CD4-positive, alpha-beta T cell (primary cell): ENCODE measurements at regions of chr2 and their contacts with region 1.

Region 1: GRCh38 chr2:64523666-64524603 is at the start of gene AFTPH:
- DNase-seq: peak; percentile 98 to 100 (median 99)
- ATAC-seq: peak; percentile 90
- H3K4me3 ChIP-seq: peak within 1 kb of the TSS; percentile 89
- H3K4me3 Mint-ChIP-seq: peak within 1 kb of the TSS; percentile 100
- H3K27ac ChIP-seq: peak within 1 kb of the TSS; percentile 72 to 95
- H3K27ac Mint-ChIP-seq: peak within 1 kb of the TSS; percentile 99
- H3K4me1 ChIP-seq: peaks cover 16% of the 10 kb centered on the region
- H3K4me1 Mint-ChIP-seq: peaks cover 47% of the 10 kb centered on the region
- H3K27me3 ChIP-seq: no peaks in the 10 kb centered on the region
- H3K27me3 Mint-ChIP-seq: no peaks in the 10 kb centered on the region
- CTCF ChIP-seq: no peak
- total RNA-seq, gene AFTPH: 24.2 to 24.3 TPM

Region 2: DNA sequence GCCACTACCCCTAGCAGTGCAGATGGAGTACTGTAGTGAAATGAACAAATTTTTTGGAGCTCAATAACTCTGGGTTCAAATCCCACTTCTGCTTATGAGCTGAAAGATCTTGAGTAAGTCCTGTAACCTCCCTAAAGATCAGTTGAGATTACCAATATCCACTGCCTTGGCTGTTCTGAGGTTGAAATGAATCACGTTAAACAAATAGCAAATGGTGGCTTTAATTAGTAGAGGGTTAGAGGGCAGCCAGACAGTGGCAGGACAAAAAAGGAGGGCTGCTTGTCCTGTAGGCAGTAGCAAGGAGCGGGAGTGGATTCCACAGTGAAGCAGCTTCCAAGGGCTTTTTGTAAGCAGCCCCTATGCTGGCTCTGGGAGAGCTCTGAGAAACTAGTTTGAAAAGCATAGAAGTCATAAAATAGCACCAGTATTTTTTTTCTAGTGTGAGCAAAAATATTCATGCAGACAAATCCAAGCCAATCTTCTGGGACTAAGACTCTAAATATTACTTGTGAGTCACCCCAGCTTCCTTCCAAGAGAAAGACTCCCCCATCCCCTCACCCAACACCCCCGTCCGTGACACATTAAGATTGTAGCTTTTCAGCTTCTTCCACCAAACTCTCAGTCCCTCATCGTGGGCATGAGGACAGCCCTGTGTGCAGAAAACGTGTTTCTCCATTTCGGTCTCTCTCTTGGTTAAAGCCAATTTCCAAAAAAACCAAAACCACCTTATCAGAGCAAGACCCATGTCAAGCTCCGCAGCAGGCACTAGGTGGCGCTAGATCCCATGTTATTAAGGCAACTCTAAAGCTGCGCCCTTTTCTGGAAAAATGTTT is 193.4 kb before region 1 on chr2:
- CTCF ChIA-PET with region 1: interaction called, 15 read pairs
- POLR2A ChIA-PET with region 1: interaction called, 6 read pairs
- intact Hi-C with region 1: no loop called
- DNase-seq: peak; percentile 63 to 92 (median 74)
- ATAC-seq: peak; percentile 24
- H3K4me3 ChIP-seq: no peak overlapping the region
- H3K4me3 Mint-ChIP-seq: peak overlapping the region; percentile 81
- H3K27ac ChIP-seq: no peak overlapping the region
- H3K27ac Mint-ChIP-seq: peak overlapping the region; percentile 50
- H3K4me1 ChIP-seq: peaks cover 36% of the 10 kb centered on the region
- H3K4me1 Mint-ChIP-seq: peaks cover 38% of the 10 kb centered on the region
- H3K27me3 ChIP-seq: no peaks in the 10 kb centered on the region
- H3K27me3 Mint-ChIP-seq: no peaks in the 10 kb centered on the region
- CTCF ChIP-seq: peak; percentile 86

Region 3: GRCh38 chr2:64562148-64562784 is 38.3 kb after region 1 on chr2:
- CTCF ChIA-PET with region 1: interaction called, 57 read pairs
- POLR2A ChIA-PET with region 1: interaction called, 12 read pairs
- intact Hi-C with region 1: loop called (anchors 1 kb)
- DNase-seq: peak in 3 of 14 experiments; percentile 56 to 62 (median 62)
- ATAC-seq: peak; percentile 73
- H3K4me3 ChIP-seq: no peak overlapping the region
- H3K4me3 Mint-ChIP-seq: no peak overlapping the region
- H3K27ac ChIP-seq: no peak overlapping the region
- H3K27ac Mint-ChIP-seq: peak overlapping the region; percentile 24
- H3K4me1 ChIP-seq: no peaks in the 10 kb centered on the region
- H3K4me1 Mint-ChIP-seq: peaks cover 42% of the 10 kb centered on the region
- H3K27me3 ChIP-seq: no peaks in the 10 kb centered on the region
- H3K27me3 Mint-ChIP-seq: no peaks in the 10 kb centered on the region
- CTCF ChIP-seq: no peak

Region 4: DNA sequence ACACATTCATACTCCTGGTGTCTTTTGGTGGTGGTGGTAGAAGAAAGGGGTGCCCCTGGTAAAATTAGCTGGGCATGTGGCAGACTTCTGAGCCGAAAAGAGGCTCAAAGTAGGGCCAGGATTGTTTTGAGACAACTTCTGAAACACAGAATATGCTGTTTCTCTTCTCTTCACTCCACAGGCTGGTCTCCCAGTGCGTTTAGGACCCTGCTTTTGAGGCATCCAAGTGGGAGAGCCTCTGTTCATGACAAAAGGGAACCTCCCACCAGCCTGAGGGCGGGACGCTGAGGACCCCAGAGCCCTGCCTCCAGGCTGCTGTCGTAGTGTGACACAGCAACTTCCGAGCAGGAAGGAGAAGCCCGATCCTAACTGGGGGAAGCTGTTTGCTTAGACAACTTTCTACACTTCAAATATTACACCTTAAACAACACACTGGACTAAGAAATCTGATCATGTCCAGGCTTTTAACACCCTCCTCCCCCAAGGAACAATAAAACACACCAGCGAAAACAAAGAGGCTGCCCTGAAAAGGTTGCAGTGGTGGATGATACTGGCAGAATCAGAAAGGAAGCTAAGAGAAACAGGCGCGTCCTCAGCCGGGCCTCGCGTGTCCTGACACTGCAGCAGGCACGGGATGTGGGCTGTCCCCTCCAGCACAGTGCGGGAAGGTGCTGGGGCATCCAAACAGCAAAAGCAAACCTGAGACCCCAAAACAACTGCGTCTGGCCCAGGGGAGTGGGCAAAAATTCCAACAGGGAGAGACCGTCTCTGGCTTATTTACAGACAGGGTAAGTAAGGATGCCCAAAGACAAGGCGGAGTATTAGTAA is 120.5 kb after region 1 on chr2:
- CTCF ChIA-PET with region 1: interaction called, 5 read pairs
- POLR2A ChIA-PET with region 1: interaction called, 7 read pairs
- intact Hi-C with region 1: loop called (anchors 5 kb)
- DNase-seq: peak in 10 of 14 experiments; percentile 26 to 68 (median 44)
- ATAC-seq: peak; percentile 75
- H3K4me3 ChIP-seq: peak overlapping the region; percentile 40
- H3K4me3 Mint-ChIP-seq: peak overlapping the region; percentile 90
- H3K27ac ChIP-seq: peak overlapping the region in 1 of 2 donors; percentile 24
- H3K27ac Mint-ChIP-seq: peak overlapping the region; percentile 73
- H3K4me1 ChIP-seq: peaks cover 37% of the 10 kb centered on the region
- H3K4me1 Mint-ChIP-seq: peaks cover 93% of the 10 kb centered on the region
- H3K27me3 ChIP-seq: no peaks in the 10 kb centered on the region
- H3K27me3 Mint-ChIP-seq: no peaks in the 10 kb centered on the region
- CTCF ChIP-seq: no peak

Region 5: DNA sequence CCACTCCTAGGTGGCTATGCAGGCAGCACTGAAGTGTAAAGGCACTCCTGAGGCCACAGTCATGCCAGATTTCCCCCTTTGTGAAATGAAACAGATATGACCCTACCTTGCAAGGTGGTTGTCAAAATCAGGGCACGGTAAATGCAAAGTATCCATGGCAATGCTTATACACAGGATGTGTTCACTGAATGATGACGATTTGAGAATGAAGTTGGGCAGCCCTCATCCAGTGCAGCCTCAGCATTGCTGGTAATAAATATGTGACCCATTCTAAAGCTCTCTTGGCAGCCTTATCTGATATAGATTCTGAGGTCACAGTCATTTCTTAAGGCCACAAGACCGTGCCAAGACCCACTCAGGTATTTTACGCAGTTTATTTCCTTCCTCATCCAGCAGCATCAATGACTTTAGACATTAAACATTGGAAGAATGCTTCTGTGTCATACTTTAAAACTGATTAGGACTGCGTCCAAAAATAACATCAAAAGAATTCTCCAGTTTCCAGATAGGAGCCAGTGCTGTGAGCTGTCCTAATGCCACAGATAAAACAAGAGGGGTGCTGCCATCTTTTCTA is 255.3 kb after region 1 on chr2:
- CTCF ChIA-PET with region 1: no interaction called
- POLR2A ChIA-PET with region 1: no interaction called
- intact Hi-C with region 1: no loop called
- DNase-seq: no peak
- ATAC-seq: no peak
- H3K4me3 ChIP-seq: no peak overlapping the region
- H3K4me3 Mint-ChIP-seq: no peak overlapping the region
- H3K27ac ChIP-seq: no peak overlapping the region
- H3K27ac Mint-ChIP-seq: no peak overlapping the region
- H3K4me1 ChIP-seq: no peaks in the 10 kb centered on the region
- H3K4me1 Mint-ChIP-seq: no peaks in the 10 kb centered on the region
- H3K27me3 ChIP-seq: no peaks in the 10 kb centered on the region
- H3K27me3 Mint-ChIP-seq: no peaks in the 10 kb centered on the region
- CTCF ChIP-seq: no peak

Region 6: DNA sequence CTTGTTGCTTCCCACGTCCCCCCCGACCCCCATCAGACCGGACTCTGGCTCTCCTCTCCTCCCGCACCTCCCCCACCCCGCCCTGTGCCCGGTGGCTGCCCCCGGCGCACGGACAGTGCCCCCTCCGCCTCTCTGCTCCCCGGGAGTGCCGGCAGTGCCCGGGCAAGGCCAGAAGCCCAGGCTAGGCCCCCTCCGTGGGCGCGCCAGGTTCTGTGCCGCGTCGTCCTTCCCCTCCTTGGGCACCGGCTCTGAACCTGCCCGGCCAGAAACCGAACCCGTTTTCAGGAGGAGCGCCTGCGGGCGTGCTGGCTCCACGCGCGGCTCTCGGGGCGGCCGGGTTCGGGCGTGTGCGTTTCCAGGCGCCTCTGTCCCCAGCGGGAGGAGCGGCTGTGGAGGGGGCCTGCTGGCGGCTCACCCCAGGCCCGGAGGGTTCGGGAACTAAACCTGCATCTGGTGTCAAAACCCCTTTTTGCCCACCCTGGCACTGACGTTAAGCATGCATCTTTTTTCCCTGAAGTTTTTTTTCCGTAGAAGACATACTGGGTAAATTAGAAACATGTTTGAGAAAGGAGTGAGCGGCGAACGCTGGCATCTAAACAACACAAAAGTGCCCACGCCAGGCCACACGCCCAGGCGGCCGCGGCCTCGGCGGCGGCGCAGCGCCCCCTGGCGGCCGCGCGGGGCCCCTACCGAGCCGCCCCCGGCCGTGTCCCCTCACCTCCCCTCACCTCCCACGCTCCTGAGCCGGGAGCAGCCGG is 341.3 kb after region 1 on chr2:
- CTCF ChIA-PET with region 1: interaction called, 3 read pairs
- POLR2A ChIA-PET with region 1: no interaction called
- intact Hi-C with region 1: loop called (anchors 1 to 2 kb)
- DNase-seq: peak; percentile 32 to 85 (median 58)
- ATAC-seq: peak; percentile 94
- H3K4me3 ChIP-seq: peak overlapping the region; percentile 62
- H3K4me3 Mint-ChIP-seq: peak overlapping the region; percentile 78
- H3K27ac ChIP-seq: no peak overlapping the region
- H3K27ac Mint-ChIP-seq: no peak overlapping the region
- H3K4me1 ChIP-seq: peaks cover 18% of the 10 kb centered on the region
- H3K4me1 Mint-ChIP-seq: no peaks in the 10 kb centered on the region
- H3K27me3 ChIP-seq: peaks cover 0 to 3% of the 10 kb centered on the region in 2 experiments
- H3K27me3 Mint-ChIP-seq: peaks cover 5% of the 10 kb centered on the region
- CTCF ChIP-seq: no peak

Region 7: DNA sequence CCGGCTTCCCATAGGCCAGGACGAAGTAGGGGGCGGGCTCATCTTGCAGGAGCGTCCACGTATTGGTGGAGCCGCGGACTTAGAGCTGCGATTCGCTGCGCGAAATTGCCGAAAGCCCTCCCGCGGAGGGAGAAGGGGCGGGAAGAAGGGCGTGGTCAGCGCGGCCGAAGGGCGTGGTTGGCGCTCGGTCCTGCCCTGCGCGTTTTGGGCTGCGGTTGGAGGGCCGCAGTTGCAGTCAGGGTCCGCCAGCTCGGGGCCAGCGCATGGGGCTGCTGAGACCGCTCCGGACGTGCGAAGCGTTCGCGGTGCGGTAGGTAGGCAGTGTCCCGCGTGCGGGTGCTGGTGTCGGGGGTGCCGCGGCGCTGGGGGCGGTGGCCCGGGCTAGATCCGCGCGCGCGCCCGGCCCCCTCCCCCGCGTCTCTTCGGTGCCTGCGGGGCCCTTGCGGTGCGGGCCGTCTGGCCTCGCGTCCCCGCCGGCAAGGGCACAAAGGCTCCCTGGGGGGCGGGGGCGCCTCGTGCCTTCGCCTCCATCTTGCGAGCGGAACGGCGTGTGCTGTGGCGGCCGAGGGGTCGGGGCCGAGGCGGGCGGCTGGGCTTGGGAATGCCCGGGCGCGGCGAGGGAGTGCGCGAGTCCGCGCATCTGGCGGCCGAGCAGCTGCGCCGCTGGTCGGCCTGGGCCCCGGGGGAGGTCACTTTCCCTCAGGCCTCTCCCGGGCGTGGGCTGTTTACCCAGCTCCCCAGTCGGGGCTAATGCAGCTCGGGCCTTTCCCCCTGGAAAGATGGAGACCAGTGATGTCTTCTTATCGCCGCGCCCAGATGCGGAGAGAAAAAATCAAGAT is 532.5 kb after region 1 on chr2 and contains the start of gene CEP68:
- CTCF ChIA-PET with region 1: no interaction called
- POLR2A ChIA-PET with region 1: interaction called, 10 read pairs
- intact Hi-C with region 1: loop called (anchors 2 to 5 kb)
- DNase-seq: peak; percentile 90 to 98 (median 94)
- ATAC-seq: peak; percentile 89
- H3K4me3 ChIP-seq: peak within 1 kb of the TSS; percentile 87
- H3K4me3 Mint-ChIP-seq: peak within 1 kb of the TSS; percentile 98
- H3K27ac ChIP-seq: peak within 1 kb of the TSS; percentile 45 to 66
- H3K27ac Mint-ChIP-seq: peak within 1 kb of the TSS; percentile 96
- H3K4me1 ChIP-seq: peaks cover 66% of the 10 kb centered on the region
- H3K4me1 Mint-ChIP-seq: peaks cover 69% of the 10 kb centered on the region
- H3K27me3 ChIP-seq: no peaks in the 10 kb centered on the region
- H3K27me3 Mint-ChIP-seq: no peaks in the 10 kb centered on the region
- CTCF ChIP-seq: no peak
- total RNA-seq, gene CEP68: 19.4 to 20.1 TPM

Region 8: DNA sequence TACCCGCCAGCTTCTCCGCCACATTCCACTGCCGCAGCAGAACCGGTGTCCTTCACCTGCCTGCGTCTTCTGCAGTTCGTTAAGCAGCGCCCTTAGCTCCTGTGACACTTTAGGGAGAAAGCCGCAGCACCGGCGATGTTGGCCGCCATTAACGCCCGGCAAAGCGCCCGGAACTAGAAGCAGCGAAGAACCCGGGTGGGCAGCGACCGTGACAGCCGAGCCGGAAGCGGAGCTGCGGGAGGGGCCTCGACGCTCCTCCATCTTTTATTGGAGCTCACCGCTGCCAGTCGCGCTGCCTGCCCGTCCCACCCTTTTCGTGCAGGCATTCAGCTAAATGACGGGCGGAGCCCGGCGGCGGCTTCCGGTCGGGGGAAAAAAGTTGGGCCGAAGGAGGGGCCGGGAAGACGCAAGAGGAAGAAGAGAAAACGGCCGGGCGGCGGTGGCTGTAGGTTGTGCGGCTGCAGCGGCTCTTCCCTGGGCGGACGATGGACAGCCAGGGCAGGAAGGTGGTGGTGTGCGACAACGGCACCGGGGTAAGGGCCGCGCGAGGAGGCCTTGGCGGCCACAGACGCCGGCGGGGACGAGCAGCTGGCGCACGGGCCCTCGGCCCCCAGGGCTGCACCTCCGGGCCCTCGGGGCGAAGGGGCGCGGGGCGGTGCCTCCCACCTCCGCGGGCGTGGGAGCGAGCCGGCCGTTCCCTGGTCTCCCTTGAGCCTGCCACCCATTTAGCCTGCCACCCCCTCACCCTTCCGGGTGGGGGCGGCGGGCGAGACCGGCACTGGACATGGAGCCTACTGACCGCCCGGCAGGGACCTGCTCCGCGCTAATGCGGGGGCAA is 703.7 kb after region 1 on chr2 and contains the start of gene ACTR2:
- CTCF ChIA-PET with region 1: no interaction called
- POLR2A ChIA-PET with region 1: interaction called, 16 read pairs
- intact Hi-C with region 1: loop called in 1 of 2 experiments (anchors 5 kb)
- DNase-seq: peak; percentile 87 to 98 (median 92)
- ATAC-seq: peak; percentile 93
- H3K4me3 ChIP-seq: peak within 1 kb of the TSS; percentile 76
- H3K4me3 Mint-ChIP-seq: peak within 1 kb of the TSS; percentile 100
- H3K27ac ChIP-seq: peak within 1 kb of the TSS; percentile 97 to 98
- H3K27ac Mint-ChIP-seq: peak within 1 kb of the TSS; percentile 98
- H3K4me1 ChIP-seq: peaks cover 35% of the 10 kb centered on the region
- H3K4me1 Mint-ChIP-seq: peaks cover 53% of the 10 kb centered on the region
- H3K27me3 ChIP-seq: no peaks in the 10 kb centered on the region
- H3K27me3 Mint-ChIP-seq: no peaks in the 10 kb centered on the region
- CTCF ChIP-seq: no peak
- total RNA-seq, gene ACTR2: 128 to 130 TPM